OCI-LY7 (cell line): ENCODE measurements at regions of chr18 and their contacts with region 1.

Region 1: DNA sequence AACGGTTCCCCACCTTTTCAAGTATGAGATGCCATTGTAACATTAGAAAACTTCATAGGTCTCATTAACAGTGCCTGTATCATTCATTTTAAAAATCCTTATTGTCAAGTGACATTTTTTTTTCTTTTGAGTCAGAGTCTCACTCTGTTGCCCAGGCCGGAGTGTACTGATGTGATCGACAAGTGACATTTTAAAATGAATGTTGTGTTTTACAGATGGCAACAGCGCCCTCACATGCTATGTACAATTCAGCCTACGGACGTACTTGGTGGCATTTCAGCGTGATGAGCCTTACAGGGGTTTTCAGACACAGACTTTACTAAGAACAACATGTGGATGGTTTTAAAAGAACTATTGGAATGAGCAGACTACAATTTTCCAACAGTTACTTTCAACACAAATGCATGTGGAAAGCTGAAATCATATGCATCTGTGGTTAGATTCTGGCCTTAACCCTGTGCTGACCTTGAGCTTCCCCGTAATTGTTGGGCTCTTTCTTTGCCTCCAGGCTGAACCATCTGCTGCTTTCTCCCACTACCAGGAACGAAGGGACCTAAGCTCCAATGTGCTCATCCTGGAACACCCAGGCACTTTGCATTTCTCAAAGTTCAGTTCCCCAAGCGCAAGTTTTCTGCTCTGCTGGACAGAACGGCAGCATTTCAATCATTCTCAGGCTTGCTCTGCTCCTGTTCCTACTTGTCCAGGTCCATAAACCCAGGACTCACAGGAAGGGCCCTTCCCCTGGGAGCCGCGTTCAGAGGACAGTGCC is 119.9 kb upstream of the NDUFV2 start:
- DNase-seq: peak; percentile 91
- H3K4me3 ChIP-seq: no peak overlapping the region
- H3K27ac ChIP-seq: no peak overlapping the region
- H3K4me1 ChIP-seq: peaks cover 63% of the 10 kb centered on the region
- CTCF ChIP-seq: peak; percentile 96

Region 2: GRCh38 chr18:8654503-8655451 is 327.8 kb before region 1 on chr18:
- CTCF ChIA-PET with region 1: interaction called, 8 read pairs
- POLR2A ChIA-PET with region 1: interaction called, 9 read pairs
- intact Hi-C with region 1: loop called (anchors 1 kb)
- DNase-seq: peak; percentile 55
- H3K4me3 ChIP-seq: no peak overlapping the region
- H3K27ac ChIP-seq: no peak overlapping the region
- H3K4me1 ChIP-seq: peaks cover 5% of the 10 kb centered on the region
- CTCF ChIP-seq: peak; percentile 91

Region 3: GRCh38 chr18:8704361-8705279 is 278.0 kb before region 1 on chr18:
- CTCF ChIA-PET with region 1: interaction called, 4 read pairs
- POLR2A ChIA-PET with region 1: interaction called, 5 read pairs
- intact Hi-C with region 1: loop called (anchors 1 kb)
- DNase-seq: peak; percentile 91
- H3K4me3 ChIP-seq: peak overlapping the region; percentile 67
- H3K27ac ChIP-seq: no peak overlapping the region
- H3K4me1 ChIP-seq: peaks cover 24% of the 10 kb centered on the region
- CTCF ChIP-seq: no peak

Region 4: DNA sequence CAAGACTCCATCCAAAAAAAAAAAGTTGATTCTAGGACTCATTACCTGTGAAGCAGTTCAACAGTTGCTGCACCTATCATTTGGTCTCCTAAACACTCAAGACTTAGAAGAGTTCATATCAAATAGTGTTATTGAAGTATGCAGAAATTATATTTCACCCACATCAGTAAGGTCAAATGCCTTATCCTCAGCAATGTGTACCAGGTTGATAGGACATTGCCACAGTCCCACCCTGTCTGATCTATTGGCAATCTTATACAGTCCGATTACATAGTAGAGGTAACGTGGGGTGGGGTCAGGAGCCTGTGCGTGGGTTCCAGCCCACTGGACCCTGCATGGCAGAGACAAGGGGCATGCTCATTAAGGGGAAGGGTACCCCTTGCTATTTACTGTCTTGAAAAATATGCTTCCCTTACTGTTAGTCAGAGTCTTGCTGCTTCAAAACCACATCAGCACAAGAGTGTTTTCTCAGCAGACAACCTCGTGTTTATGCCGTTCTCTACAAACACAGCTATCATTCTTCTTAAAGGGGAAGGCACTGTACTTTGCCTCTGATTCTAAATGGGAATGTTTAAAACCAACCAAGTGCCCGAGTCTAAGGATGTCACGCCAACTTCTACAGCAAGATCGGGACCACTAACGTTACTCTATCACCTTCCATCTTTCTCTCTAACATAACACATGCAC is 162.1 kb before region 1 on chr18:
- CTCF ChIA-PET with region 1: interaction called, 3 read pairs
- POLR2A ChIA-PET with region 1: no interaction called
- intact Hi-C with region 1: loop called (anchors 5 kb)
- DNase-seq: no peak
- H3K4me3 ChIP-seq: no peak overlapping the region
- H3K27ac ChIP-seq: no peak overlapping the region
- H3K4me1 ChIP-seq: no peaks in the 10 kb centered on the region
- CTCF ChIP-seq: no peak

Region 5: DNA sequence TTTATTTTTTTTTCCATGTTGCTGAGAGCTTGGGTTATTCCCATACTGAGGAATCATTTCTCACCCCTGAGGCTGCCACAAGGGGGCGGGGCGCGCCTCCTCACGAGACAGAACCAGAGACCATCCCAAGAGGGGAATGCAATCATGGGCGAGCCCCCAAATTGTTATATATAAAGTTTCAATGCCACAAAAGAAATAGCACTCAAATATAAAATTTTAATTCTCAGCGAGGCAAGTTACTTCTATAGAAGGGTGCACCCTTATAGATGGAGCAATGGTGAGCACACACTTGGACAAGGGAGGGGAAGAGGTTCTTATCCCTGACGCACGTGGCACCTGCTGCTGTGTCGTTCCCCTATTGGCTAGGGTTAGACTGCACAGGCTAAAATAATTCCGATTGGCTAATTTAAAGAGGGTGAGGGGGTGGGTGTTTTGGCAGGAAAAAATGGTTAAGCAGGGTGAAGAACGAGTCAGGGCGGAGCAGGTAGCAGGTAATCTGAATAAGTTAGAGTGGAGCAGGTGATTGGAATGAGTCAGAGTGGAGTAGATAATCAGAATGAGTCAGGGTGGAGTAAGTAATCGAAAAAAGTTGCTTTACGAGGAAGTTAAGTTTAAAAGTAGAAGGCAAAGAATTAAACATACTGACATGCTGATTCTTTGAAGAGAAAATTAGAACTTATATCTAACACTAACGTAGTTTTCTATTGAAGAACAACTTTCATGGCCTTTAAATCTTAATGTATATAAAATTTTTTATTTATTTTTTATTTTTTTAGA is 99.8 kb before region 1 on chr18:
- CTCF ChIA-PET with region 1: interaction called, 3 read pairs
- POLR2A ChIA-PET with region 1: interaction called, 3 read pairs
- intact Hi-C with region 1: loop called (anchors 2 kb)
- DNase-seq: peak; percentile 80
- H3K4me3 ChIP-seq: no peak overlapping the region
- H3K27ac ChIP-seq: no peak overlapping the region
- H3K4me1 ChIP-seq: no peaks in the 10 kb centered on the region
- CTCF ChIP-seq: peak; percentile 74

Region 6: DNA sequence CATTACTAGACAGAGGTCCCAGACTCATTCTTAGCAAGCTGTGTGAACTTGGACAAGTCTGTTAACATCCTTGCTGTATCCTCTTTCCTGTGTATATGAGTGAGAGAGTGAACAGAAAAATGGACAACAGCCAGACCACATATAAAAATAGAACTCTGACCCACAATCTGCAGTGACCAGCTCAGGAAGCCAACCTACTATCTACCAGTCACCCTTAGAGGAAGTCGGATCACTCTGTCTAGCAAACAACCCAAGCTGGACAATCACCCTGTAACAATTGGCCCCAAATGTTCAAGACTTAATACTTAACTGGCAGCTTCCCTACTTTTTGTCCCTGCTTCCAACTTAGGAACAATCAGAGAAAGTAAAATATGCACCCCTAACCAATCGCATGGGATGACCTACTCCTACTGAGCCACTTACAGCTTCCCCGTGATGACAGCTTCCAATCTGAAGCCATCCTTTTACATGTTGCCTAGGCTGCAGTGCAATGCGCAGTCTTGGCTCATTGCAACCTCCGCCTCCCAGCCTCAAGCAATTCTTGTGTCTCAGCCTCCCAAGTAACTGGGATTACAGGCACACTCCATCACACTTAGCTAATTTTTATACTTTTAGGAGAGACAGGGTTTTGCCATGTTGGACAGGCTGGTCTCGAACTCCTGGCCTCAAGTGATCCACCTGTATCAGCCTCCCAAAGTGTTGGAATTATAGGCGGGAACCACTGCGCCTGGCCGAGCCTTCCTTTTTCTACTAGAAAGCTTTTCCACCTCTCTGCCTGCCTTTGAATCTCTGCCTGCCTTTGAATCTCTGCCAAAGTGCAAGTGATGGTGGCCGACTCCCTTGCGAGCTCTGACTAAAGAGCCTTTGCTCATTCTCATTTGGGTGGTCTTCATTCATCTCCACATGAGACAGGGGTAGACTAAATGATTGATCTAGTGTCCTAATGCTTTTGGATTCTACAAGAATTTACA is 38.4 kb before region 1 on chr18:
- CTCF ChIA-PET with region 1: interaction called, 3 read pairs
- POLR2A ChIA-PET with region 1: interaction called, 4 read pairs
- intact Hi-C with region 1: loop called (anchors 2 kb)
- DNase-seq: no peak
- H3K4me3 ChIP-seq: peak overlapping the region; percentile 26
- H3K27ac ChIP-seq: peak overlapping the region; percentile 90
- H3K4me1 ChIP-seq: peaks cover 79% of the 10 kb centered on the region
- CTCF ChIP-seq: no peak